ENCODE measurements at regions of chr10 and their contacts with region 1.

Region 1: GRCh38 chr10:42875792-42876460 is 93.3 kb downstream of the BMS1 start:
- DNase-seq: no peak
- ATAC-seq: peak in 3 of 4 donors; percentile 28 to 35 (median 34)
- H3K4me3 ChIP-seq: no peak overlapping the region
- H3K27ac ChIP-seq: no peak overlapping the region
- H3K4me1 ChIP-seq: no peaks in the 10 kb centered on the region
- H3K27me3 ChIP-seq: no peaks in the 10 kb centered on the region
- CTCF ChIP-seq: no peak
- POLR2A ChIP-seq: no peak

Region 2: DNA sequence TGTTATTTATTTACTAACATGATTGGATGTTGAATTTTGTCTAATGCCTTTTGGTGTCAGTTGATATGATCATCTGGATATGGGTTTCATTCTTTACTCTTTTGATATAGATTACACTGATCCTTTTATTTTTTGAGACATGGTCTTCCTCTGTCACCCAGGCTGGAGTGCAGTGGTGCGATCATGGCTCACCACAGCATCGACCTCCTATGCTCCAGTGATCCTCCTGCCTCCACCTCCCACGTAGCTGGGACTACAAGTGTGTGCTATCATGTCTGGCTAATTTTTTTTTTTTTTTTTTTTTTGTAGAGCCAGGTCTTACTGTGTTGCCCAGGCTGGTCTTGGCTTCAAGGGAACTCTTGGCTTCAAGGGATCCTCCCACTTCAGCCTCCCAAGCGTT is 66.3 kb before region 1 on chr10:
- intact Hi-C with region 1: no loop called
- DNase-seq: no peak
- ATAC-seq: no peak
- H3K4me3 ChIP-seq: no peak overlapping the region
- H3K27ac ChIP-seq: no peak overlapping the region
- H3K4me1 ChIP-seq: no peaks in the 10 kb centered on the region
- H3K27me3 ChIP-seq: no peaks in the 10 kb centered on the region
- CTCF ChIP-seq: no peak
- POLR2A ChIP-seq: no peak

Region 3: GRCh38 chr10:43105102-43105785 is 229.3 kb after region 1 on chr10:
- intact Hi-C with region 1: loop called (anchors 5 to 10 kb)
- DNase-seq: peak; percentile 71 to 78 (median 74)
- ATAC-seq: peak; percentile 93 to 98 (median 97)
- H3K4me3 ChIP-seq: peak overlapping the region; percentile 40 to 59 (median 50)
- H3K27ac ChIP-seq: no peak overlapping the region
- H3K4me1 ChIP-seq: peaks cover 0 to 9% (median 0%) of the 10 kb centered on the region in 4 donors
- H3K27me3 ChIP-seq: no peaks in the 10 kb centered on the region
- CTCF ChIP-seq: peak; percentile 99 to 100 (median 99)
- POLR2A ChIP-seq: no peak

Measured in right lobe of liver (tissue), 6 donors.